HCT116 (cell line): ENCODE measurements at regions of chr3 and their contacts with region 1.

Region 1: DNA sequence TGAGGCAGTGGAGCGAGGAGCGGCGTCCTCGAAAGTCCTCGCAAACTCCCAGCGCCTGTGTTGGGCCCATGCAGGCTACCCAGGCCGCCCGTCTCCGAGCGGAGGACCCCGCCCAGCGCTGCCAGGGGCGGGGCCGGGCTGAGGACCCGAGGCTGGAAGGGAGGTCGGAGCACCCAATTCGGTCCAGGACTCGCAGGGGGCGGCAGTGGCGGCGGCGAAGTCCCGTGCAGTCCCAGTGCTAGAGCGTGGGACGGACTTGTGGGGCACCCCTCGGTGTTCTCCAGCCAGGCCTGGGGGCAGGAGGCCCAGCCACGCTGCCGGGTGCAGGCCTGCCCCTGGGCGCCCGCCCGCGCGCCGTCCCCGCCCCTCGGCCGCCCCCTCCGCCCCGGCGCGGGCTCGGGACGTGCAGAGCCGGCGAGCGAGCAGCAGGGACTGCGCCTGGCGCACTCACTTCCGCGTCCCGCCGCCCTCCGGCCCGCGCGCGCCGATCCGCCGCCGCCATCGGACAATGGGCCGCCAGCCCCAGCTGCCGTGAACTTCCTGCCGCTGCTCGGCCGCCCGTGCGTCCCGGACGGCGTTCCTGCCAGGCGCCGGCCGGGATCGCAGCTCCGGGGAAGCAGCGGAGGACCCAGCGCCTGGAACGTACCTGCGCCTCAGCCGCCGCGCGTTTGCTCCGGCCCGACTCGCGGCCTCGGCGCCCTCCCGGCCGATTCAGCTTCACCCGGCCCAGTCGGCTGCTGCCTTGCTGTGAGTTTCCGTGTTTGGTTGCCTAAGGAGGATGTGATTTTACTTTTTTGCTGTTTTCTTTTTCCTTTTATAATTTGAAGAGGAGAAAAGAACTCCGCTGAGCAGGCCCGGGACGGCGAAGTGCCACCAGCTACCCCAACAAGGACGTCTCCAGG is 592 bp upstream of the LIMD1 start:
- DNase-seq: peak; percentile 47
- ATAC-seq: peak; percentile 89
- H3K4me3 ChIP-seq: peak overlapping the region; percentile 56 to 75
- H3K27ac ChIP-seq: peak overlapping the region; percentile 94
- H3K4me1 ChIP-seq: peaks cover 12 to 38% of the 10 kb centered on the region in 2 experiments
- H3K27me3 ChIP-seq: no peaks in the 10 kb centered on the region
- CTCF ChIP-seq: no peak
- POLR2A ChIP-seq: peak; percentile 50
- RAD21 ChIP-seq: no peak

Region 2: GRCh38 chr3:45367453-45367871 is 226.5 kb before region 1 on chr3:
- CTCF ChIA-PET with region 1: no interaction called
- POLR2A ChIA-PET with region 1: no interaction called
- RAD21 ChIA-PET with region 1: no interaction called
- intact Hi-C with region 1: no loop called
- DNase-seq: peak; percentile 27
- ATAC-seq: peak; percentile 22; the same call in 1 of the 2 replicates
- H3K4me3 ChIP-seq: no peak overlapping the region
- H3K27ac ChIP-seq: no peak overlapping the region
- H3K4me1 ChIP-seq: peaks cover 0 to 6% of the 10 kb centered on the region in 2 experiments; a peak in 2 of 4 replicates
- H3K27me3 ChIP-seq: no peaks in the 10 kb centered on the region
- CTCF ChIP-seq: no peak
- POLR2A ChIP-seq: no peak
- RAD21 ChIP-seq: no peak

Region 3: DNA sequence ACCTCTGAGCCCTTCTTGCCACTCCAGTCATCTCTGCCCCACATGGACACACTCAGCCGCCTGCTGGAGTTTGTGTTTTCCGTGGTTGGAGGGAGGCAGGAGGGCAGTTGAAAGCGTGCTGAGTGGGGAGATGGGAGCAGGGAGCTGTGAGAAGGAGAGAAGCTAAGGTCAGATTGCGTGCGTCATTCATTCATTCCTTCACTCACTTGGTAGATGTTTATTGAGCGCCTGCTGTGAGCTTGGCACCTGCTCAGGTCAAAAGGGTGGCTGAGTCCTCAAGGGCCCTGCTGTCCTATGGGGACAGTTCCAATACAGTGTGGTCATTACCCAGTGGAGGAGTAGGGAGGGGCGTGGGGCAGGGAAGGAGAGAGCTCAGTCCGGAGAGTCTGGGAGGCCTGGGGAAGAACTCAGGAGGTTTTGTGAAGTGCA is 24.1 kb after region 1 on chr3:
- CTCF ChIA-PET with region 1: no interaction called
- POLR2A ChIA-PET with region 1: no interaction called
- RAD21 ChIA-PET with region 1: no interaction called
- intact Hi-C with region 1: loop called (anchors 1 kb)
- DNase-seq: no peak
- ATAC-seq: no peak
- H3K4me3 ChIP-seq: no peak overlapping the region
- H3K27ac ChIP-seq: no peak overlapping the region
- H3K4me1 ChIP-seq: no peaks in the 10 kb centered on the region
- H3K27me3 ChIP-seq: no peaks in the 10 kb centered on the region
- CTCF ChIP-seq: no peak
- POLR2A ChIP-seq: no peak
- RAD21 ChIP-seq: no peak

Region 4: DNA sequence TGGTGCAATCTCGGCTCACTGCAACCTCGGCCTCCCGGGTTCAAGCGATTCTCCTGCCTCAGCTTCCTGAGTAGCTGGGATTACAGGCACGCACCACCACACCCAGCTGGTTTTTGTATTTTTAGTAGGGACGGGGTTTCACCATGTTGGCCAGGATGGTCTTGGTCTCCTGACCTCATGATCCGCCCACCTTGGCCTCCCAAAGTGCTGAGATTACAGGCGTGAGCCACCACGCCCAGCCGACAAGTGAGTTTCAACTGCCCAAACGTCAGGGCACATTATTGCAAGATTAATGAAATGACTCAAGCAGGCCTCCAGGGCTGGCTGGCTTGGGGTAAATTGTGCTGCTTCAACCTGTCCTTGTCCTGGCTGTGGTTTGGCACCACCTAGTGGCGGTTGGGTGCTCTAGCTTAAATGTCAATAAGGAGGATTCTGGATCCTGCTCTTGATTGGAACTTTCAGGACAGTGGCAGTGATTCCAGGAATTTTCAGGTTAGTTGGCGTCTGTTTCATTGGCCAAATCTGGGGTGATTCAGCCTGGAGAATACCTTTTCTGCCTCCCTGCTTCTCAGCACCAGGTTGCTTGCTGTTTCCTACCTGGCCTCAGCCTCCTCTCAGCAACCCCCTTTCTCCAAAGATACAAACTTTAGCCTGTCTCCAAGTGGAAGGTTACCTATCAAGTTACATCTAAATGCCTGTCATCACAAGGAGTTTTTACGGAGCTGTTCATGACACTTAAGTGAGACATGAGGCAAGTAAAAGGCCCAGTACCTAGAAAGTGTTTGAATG is 62.8 kb after region 1 on chr3:
- CTCF ChIA-PET with region 1: interaction called, 4 read pairs
- POLR2A ChIA-PET with region 1: no interaction called
- RAD21 ChIA-PET with region 1: no interaction called
- intact Hi-C with region 1: loop called (anchors 2 kb)
- DNase-seq: peak; percentile 89
- ATAC-seq: peak; percentile 90
- H3K4me3 ChIP-seq: no peak overlapping the region
- H3K27ac ChIP-seq: no peak overlapping the region
- H3K4me1 ChIP-seq: peaks cover 0 to 15% of the 10 kb centered on the region in 2 experiments; a peak in 1 of 4 replicates
- H3K27me3 ChIP-seq: no peaks in the 10 kb centered on the region
- CTCF ChIP-seq: peak; percentile 86 to 93 (median 91)
- POLR2A ChIP-seq: no peak
- RAD21 ChIP-seq: peak; percentile 95

Region 5: DNA sequence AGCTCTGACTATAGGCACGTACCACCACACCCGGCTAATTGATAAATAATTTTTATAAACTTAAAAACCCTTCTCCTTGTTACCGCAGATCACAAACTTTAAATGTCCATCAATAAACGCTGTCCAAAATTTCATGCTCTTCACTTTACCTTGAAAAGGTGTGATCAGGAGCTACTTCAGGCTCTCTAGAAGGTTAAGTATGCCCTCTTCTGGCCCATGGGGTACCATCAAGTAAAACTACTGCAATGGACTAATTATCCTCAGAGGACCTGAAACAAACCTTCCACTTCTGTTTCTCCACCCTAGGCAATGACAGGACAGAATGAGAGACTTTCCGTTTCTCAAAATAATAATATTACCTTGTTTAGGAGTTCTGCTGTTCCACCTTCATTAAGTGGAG is 238.7 kb after region 1 on chr3:
- CTCF ChIA-PET with region 1: no interaction called
- POLR2A ChIA-PET with region 1: no interaction called
- RAD21 ChIA-PET with region 1: no interaction called
- intact Hi-C with region 1: loop called (anchors 2 kb)
- DNase-seq: peak; percentile 21
- ATAC-seq: peak; percentile 93
- H3K4me3 ChIP-seq: no peak overlapping the region
- H3K27ac ChIP-seq: no peak overlapping the region
- H3K4me1 ChIP-seq: no peaks in the 10 kb centered on the region
- H3K27me3 ChIP-seq: no peaks in the 10 kb centered on the region
- CTCF ChIP-seq: peak; percentile 37 to 73 (median 57)
- POLR2A ChIP-seq: no peak
- RAD21 ChIP-seq: peak; percentile 88

Region 6: GRCh38 chr3:46006238-46007032 is 412.5 kb after region 1 on chr3:
- CTCF ChIA-PET with region 1: no interaction called
- POLR2A ChIA-PET with region 1: no interaction called
- RAD21 ChIA-PET with region 1: no interaction called
- intact Hi-C with region 1: no loop called
- DNase-seq: no peak
- ATAC-seq: no peak
- H3K4me3 ChIP-seq: no peak overlapping the region
- H3K27ac ChIP-seq: no peak overlapping the region
- H3K4me1 ChIP-seq: no peaks in the 10 kb centered on the region
- H3K27me3 ChIP-seq: no peaks in the 10 kb centered on the region
- CTCF ChIP-seq: no peak
- POLR2A ChIP-seq: no peak
- RAD21 ChIP-seq: no peak